Endothelial cell of umbilical vein (primary cell): ENCODE measurements at regions of chr15 and their contacts with region 1.

Region 1: GRCh38 chr15:57375827-57376695 is at the start of gene CGNL1:
- DNase-seq: peak; percentile 49
- H3K4me3 ChIP-seq: peak within 1 kb of the TSS; percentile 15 to 87 (median 53)
- H3K27ac ChIP-seq: peak within 1 kb of the TSS; percentile 2
- H3K4me1 ChIP-seq: peaks cover 25% of the 10 kb centered on the region
- H3K27me3 ChIP-seq: peaks cover 0 to 3% of the 10 kb centered on the region in 2 experiments
- CTCF ChIP-seq: no peak
- POLR2A ChIP-seq: peak; percentile 66
- total RNA-seq, gene CGNL1: 25.7 and 27.1 TPM in 2 replicates

Region 2: GRCh38 chr15:56918046-56918938 is 457.8 kb before region 1 on chr15 and contains the start of gene TCF12:
- CTCF ChIA-PET with region 1: no interaction called
- POLR2A ChIA-PET with region 1: no interaction called
- dilution Hi-C with region 1: no loop called
- intact Hi-C with region 1: no loop called
- DNase-seq: peak; percentile 94
- H3K4me3 ChIP-seq: peak within 1 kb of the TSS; percentile 87 to 98 (median 87)
- H3K27ac ChIP-seq: peak within 1 kb of the TSS; percentile 86
- H3K4me1 ChIP-seq: peaks cover 42% of the 10 kb centered on the region
- H3K27me3 ChIP-seq: no peaks in the 10 kb centered on the region
- CTCF ChIP-seq: peak; percentile 11 to 51
- POLR2A ChIP-seq: peak; percentile 45
- total RNA-seq, gene TCF12: 127 and 133 TPM in 2 replicates

Region 3: GRCh38 chr15:57387564-57388076 is 11.6 kb after region 1 on chr15:
- CTCF ChIA-PET with region 1: interaction called, 19 read pairs
- POLR2A ChIA-PET with region 1: interaction called, 4 read pairs
- dilution Hi-C with region 1: no loop called
- intact Hi-C with region 1: loop called (anchors 1 kb)
- DNase-seq: peak; percentile 75
- H3K4me3 ChIP-seq: no peak overlapping the region
- H3K27ac ChIP-seq: peak overlapping the region; percentile 16
- H3K4me1 ChIP-seq: peaks cover 64% of the 10 kb centered on the region
- H3K27me3 ChIP-seq: no peaks in the 10 kb centered on the region
- CTCF ChIP-seq: no peak
- POLR2A ChIP-seq: no peak